ENCODE measurements at regions of chr11 and their contacts with region 1.

Region 1: GRCh38 chr11:68121067-68121899 is at the start of gene CHKA:
- DNase-seq: peak; percentile 95
- H3K4me3 ChIP-seq: peak within 1 kb of the TSS; percentile 66 to 95 (median 81)
- H3K27ac ChIP-seq: peak within 1 kb of the TSS; percentile 96 to 100 (median 98)
- H3K4me1 ChIP-seq: peaks cover 15 to 60% (median 51%) of the 10 kb centered on the region in 4 donors
- H3K27me3 ChIP-seq: no peaks in the 10 kb centered on the region
- CTCF ChIP-seq: no peak
- EP300 ChIP-seq: no peak
- POLR2A ChIP-seq: peak; percentile 83
- total RNA-seq, gene CHKA: 41.6 to 253 (median 121) TPM

Region 2: GRCh38 chr11:68014157-68014966 is 106.9 kb before region 1 on chr11:
- in situ Hi-C with region 1: no loop called
- intact Hi-C with region 1: no loop called
- DNase-seq: peak; percentile 80
- H3K4me3 ChIP-seq: no peak overlapping the region
- H3K27ac ChIP-seq: peak overlapping the region; percentile 48 to 95 (median 58)
- H3K4me1 ChIP-seq: peaks cover 32 to 47% (median 37%) of the 10 kb centered on the region in 4 donors
- H3K27me3 ChIP-seq: no peaks in the 10 kb centered on the region
- CTCF ChIP-seq: no peak
- EP300 ChIP-seq: no peak
- POLR2A ChIP-seq: peak; percentile 49

Region 3: GRCh38 chr11:68030318-68031138 is 90.8 kb before region 1 on chr11 and contains the start of gene NDUFS8:
- in situ Hi-C with region 1: no loop called
- intact Hi-C with region 1: loop called (anchors 10 kb)
- DNase-seq: peak; percentile 97
- H3K4me3 ChIP-seq: peak within 1 kb of the TSS; percentile 71 to 86 (median 80)
- H3K27ac ChIP-seq: peak within 1 kb of the TSS; percentile 89 to 96 (median 90)
- H3K4me1 ChIP-seq: peaks cover 9 to 22% (median 18%) of the 10 kb centered on the region in 4 donors
- H3K27me3 ChIP-seq: no peaks in the 10 kb centered on the region
- CTCF ChIP-seq: no peak
- EP300 ChIP-seq: no peak
- POLR2A ChIP-seq: peak; percentile 66
- total RNA-seq, gene NDUFS8: 155 to 226 (median 188) TPM

Region 4: GRCh38 chr11:68213555-68214174 is 92.4 kb after region 1 on chr11:
- in situ Hi-C with region 1: no loop called
- intact Hi-C with region 1: loop called (anchors 5 kb)
- DNase-seq: peak; percentile 89
- H3K4me3 ChIP-seq: peak overlapping the region; percentile 70 to 97 (median 81)
- H3K27ac ChIP-seq: peak overlapping the region; percentile 97 to 99 (median 98)
- H3K4me1 ChIP-seq: peaks cover 35 to 55% (median 52%) of the 10 kb centered on the region in 4 donors
- H3K27me3 ChIP-seq: no peaks in the 10 kb centered on the region
- CTCF ChIP-seq: peak in 3 of 5 experiments; percentile 12 to 57 (median 17)
- EP300 ChIP-seq: no peak
- POLR2A ChIP-seq: peak; percentile 98